CD14-positive monocyte (primary cell): ENCODE measurements at regions of chr20 and their contacts with region 1.

Region 1: GRCh38 chr20:50635667-50636503 is 55.5 kb downstream of the RIPOR3 start:
- DNase-seq: peak; percentile 25 to 43 (median 27)
- H3K4me3 ChIP-seq: no peak overlapping the region
- H3K4me3 Mint-ChIP-seq: peak overlapping the region in 1 of 2 donors; percentile 51
- H3K27ac ChIP-seq: no peak overlapping the region
- H3K27ac Mint-ChIP-seq: peak overlapping the region in 1 of 7 donors; percentile 26
- H3K4me1 ChIP-seq: no peaks in the 10 kb centered on the region
- H3K4me1 Mint-ChIP-seq: peaks cover 8% of the 10 kb centered on the region
- H3K27me3 ChIP-seq: no peaks in the 10 kb centered on the region
- H3K27me3 Mint-ChIP-seq: peaks cover 0 to 10% (median 4%) of the 10 kb centered on the region in 3 donors
- CTCF ChIP-seq: peak; percentile 94

Region 2: DNA sequence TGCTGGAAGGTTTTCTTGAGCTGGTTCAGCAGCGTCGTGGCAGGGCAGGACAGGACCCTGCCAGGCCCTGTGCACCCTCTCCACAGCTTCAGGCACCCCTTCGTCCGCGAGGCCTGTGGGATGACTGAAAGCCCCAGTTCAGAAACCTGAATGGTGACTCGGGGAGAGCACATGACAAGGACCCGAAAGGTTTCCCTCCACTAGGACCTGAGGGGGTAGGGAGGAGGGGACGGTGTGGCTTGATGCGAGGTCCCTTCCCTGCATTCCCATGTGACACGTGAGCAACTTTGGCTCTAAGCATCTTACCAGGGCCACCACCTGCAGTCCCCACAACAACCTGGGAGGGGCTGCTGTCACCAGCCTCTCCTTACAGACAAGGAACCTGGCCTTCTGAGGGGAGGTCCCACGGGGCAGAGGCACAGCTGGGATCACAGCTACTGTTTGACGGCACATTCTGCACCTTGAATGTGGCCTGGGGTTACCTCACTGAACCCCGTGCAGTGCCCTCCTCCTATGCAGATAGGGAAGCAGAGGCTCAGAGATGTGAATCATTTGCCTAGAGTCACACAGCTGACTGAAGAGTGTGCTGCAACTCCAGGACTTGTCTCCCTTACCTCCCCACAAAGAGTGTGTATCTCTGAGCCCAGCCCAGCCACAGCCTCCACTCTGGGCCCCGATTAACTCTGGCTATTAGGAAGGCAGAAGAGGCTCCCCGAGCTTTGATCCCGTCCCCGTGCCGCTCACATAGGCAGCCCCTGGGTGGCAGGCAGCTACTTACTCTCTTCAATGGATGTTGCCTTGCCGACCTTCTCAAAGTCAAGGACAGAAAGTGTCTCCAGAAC is 41.1 kb before region 1 on chr20:
- intact Hi-C with region 1: no loop called
- DNase-seq: peak in 1 of 3 donors; percentile 9
- H3K4me3 ChIP-seq: no peak overlapping the region
- H3K4me3 Mint-ChIP-seq: no peak overlapping the region
- H3K27ac ChIP-seq: no peak overlapping the region
- H3K27ac Mint-ChIP-seq: no peak overlapping the region
- H3K4me1 ChIP-seq: no peaks in the 10 kb centered on the region
- H3K4me1 Mint-ChIP-seq: peaks cover 5% of the 10 kb centered on the region
- H3K27me3 ChIP-seq: no peaks in the 10 kb centered on the region
- H3K27me3 Mint-ChIP-seq: peaks cover 3 to 11% (median 6%) of the 10 kb centered on the region in 3 donors
- CTCF ChIP-seq: no peak

Region 3: DNA sequence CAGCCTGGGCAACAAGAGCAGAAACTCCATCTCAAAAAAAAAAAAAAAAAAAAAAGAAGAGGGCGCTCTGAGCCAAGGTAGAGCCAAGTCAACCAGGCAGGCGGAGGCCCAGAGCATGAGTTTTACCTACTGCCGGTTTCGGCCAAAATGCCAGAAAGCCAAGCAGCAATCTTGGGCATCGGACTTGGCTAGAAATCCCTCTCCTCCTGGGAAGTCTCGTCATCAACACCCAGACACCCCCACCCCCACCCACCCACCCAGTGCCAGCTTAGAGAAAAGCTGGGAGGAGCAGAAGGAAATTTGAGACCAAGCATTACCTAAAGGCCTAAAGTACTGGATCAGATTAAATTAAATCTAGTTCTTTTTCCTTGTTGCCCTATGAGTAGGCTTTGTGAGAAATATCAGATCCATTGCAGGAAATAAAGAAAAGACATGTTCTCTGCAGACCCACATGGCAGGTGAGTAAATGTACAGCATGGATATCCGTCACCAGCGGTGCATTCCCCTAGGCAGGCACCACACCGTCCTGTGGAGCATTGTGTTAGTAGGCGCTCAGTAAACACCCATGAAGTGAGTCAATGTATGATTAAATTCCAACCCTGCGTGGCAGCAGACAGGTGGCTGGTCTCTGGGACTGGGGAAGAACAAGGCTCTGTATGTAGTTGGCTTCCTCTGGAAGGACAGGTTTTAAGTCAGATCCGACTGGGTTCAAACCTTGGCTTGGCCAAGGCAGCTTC is 34.4 kb after region 1 on chr20:
- intact Hi-C with region 1: no loop called
- DNase-seq: no peak
- H3K4me3 ChIP-seq: no peak overlapping the region
- H3K4me3 Mint-ChIP-seq: no peak overlapping the region
- H3K27ac ChIP-seq: no peak overlapping the region
- H3K27ac Mint-ChIP-seq: no peak overlapping the region
- H3K4me1 ChIP-seq: no peaks in the 10 kb centered on the region
- H3K4me1 Mint-ChIP-seq: no peaks in the 10 kb centered on the region
- H3K27me3 ChIP-seq: no peaks in the 10 kb centered on the region
- H3K27me3 Mint-ChIP-seq: peaks cover 1 to 6% (median 1%) of the 10 kb centered on the region in 3 donors
- CTCF ChIP-seq: no peak

Region 4: GRCh38 chr20:50713657-50714101 is 77.8 kb after region 1 on chr20:
- intact Hi-C with region 1: no loop called
- DNase-seq: no peak
- H3K4me3 ChIP-seq: no peak overlapping the region
- H3K4me3 Mint-ChIP-seq: no peak overlapping the region
- H3K27ac ChIP-seq: no peak overlapping the region
- H3K27ac Mint-ChIP-seq: peak overlapping the region in 1 of 7 donors; percentile 1
- H3K4me1 ChIP-seq: peaks cover 8 to 9% of the 10 kb centered on the region in 2 donors
- H3K4me1 Mint-ChIP-seq: peaks cover 13% of the 10 kb centered on the region
- H3K27me3 ChIP-seq: no peaks in the 10 kb centered on the region
- H3K27me3 Mint-ChIP-seq: peaks cover 3 to 23% (median 18%) of the 10 kb centered on the region in 3 donors
- CTCF ChIP-seq: no peak

Region 5: DNA sequence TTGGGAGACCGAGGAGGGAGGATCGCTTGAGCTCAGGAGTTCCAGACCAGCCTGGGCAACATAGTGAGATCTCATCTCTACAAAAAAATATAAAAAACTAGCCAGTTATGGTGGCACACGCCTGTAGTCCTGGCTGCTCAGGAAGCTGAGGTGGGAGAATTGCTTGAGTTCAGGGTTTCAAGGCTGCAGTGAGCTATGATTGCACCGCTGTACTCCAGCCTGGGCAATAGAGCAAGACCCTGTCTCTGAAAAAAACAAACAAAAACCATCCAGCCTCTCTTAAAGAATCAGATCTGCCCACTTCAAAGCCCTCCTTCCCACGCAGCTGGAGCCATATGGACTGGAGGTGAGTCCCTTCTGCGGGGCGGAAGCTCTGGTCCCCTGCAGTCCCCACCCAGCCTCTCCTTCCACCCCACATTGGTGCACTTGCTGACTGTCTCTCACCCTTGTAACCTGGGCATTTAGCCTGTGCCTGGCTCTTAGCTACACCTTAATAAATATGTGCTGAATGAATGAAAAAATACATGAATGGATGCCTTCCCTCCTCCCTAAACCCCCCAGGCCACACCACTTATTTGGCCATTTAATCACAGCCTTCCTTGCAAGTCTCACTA is 88.3 kb after region 1 on chr20:
- intact Hi-C with region 1: no loop called
- DNase-seq: no peak
- H3K4me3 ChIP-seq: no peak overlapping the region
- H3K4me3 Mint-ChIP-seq: no peak overlapping the region
- H3K27ac ChIP-seq: no peak overlapping the region
- H3K27ac Mint-ChIP-seq: no peak overlapping the region
- H3K4me1 ChIP-seq: no peaks in the 10 kb centered on the region
- H3K4me1 Mint-ChIP-seq: peaks cover 2% of the 10 kb centered on the region
- H3K27me3 ChIP-seq: no peaks in the 10 kb centered on the region
- H3K27me3 Mint-ChIP-seq: peaks cover 0 to 4% (median 3%) of the 10 kb centered on the region in 3 donors
- CTCF ChIP-seq: no peak

Region 6: GRCh38 chr20:50765674-50766073 is 129.8 kb after region 1 on chr20:
- intact Hi-C with region 1: loop called in 1 of 2 experiments (anchors 5 kb)
- DNase-seq: no peak
- H3K4me3 ChIP-seq: no peak overlapping the region
- H3K4me3 Mint-ChIP-seq: no peak overlapping the region
- H3K27ac ChIP-seq: no peak overlapping the region
- H3K27ac Mint-ChIP-seq: no peak overlapping the region
- H3K4me1 ChIP-seq: no peaks in the 10 kb centered on the region
- H3K4me1 Mint-ChIP-seq: peaks cover 6% of the 10 kb centered on the region
- H3K27me3 ChIP-seq: no peaks in the 10 kb centered on the region
- H3K27me3 Mint-ChIP-seq: no peaks in the 10 kb centered on the region
- CTCF ChIP-seq: no peak